SK-N-SH (cell line): ENCODE measurements at regions of chr11 and their contacts with region 1.

Region 1: GRCh38 chr11:1694064-1694845 is 2.7 kb upstream of the KRTAP5-6 start:
- DNase-seq: peak; percentile 95
- H3K4me3 ChIP-seq: peak overlapping the region in 1 of 2 experiments; percentile 51; a peak in 1 of 4 replicates
- H3K27ac ChIP-seq: peak overlapping the region in 1 of 2 experiments; percentile 73; a peak in 1 of 4 replicates
- H3K4me1 ChIP-seq: peaks cover 6 to 13% of the 10 kb centered on the region in 2 experiments; a peak in 2 of 4 replicates
- H3K27me3 ChIP-seq: no peaks in the 10 kb centered on the region
- CTCF ChIP-seq: peak; percentile 85
- EP300 ChIP-seq: no peak
- RAD21 ChIP-seq: peak; percentile 91

Region 2: DNA sequence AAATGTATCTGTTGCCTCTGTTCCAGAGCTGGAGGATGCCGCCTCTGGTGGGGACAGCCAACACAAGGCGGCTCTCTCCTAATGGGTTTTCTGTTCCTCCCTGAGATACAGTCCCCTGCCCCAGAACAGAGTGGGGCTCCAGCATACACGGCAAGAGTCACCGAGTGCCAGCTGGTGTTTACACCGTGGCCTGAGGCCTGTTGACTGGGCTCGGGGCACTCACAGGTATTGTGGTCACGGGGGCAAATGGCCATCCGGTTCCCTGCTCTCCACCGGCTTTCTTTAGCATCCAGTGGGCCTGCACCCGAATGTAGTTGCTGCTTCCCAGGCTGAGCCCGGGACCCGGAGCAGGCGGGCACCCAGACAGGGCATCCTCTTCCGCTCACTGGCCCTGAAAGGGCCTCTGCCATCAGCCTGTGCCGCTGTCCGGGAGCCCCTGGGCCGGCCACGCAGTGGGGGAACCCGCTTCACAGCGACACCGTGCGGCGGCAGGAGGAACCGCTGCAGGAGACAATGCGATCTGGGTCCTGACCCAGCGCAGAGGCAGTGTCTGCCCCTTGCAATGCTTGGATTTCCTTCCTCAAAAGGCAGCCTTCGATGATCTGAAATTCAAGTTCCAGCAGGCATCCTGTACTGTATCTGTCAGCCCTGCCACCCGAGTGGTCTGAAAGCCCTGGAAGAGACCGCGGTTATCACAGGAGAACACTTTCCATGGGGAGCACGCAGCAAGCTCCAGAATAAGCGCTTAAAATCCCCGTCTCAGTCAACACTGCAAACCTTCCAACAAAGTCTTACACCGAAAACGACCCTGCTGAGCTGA is 65.5 kb before region 1 on chr11:
- CTCF ChIA-PET with region 1: interaction called, 12 read pairs
- POLR2A ChIA-PET with region 1: no interaction called
- DNase-seq: peak; percentile 96
- H3K4me3 ChIP-seq: peak overlapping the region in 1 of 2 experiments; percentile 35; a peak in 1 of 4 replicates
- H3K27ac ChIP-seq: no peak overlapping the region
- H3K4me1 ChIP-seq: peaks cover 0 to 11% of the 10 kb centered on the region in 2 experiments; a peak in 1 of 4 replicates
- H3K27me3 ChIP-seq: peaks cover 19% of the 10 kb centered on the region; the same call in 1 of the 2 replicates
- CTCF ChIP-seq: peak; percentile 85
- EP300 ChIP-seq: no peak
- RAD21 ChIP-seq: peak; percentile 69

Region 3: GRCh38 chr11:1706634-1707400 is 12.6 kb after region 1 on chr11:
- CTCF ChIA-PET with region 1: interaction called, 46 read pairs
- POLR2A ChIA-PET with region 1: no interaction called
- DNase-seq: no peak
- H3K4me3 ChIP-seq: no peak overlapping the region
- H3K27ac ChIP-seq: no peak overlapping the region
- H3K4me1 ChIP-seq: no peaks in the 10 kb centered on the region; a peak in 1 of 4 replicates
- H3K27me3 ChIP-seq: no peaks in the 10 kb centered on the region; the same call in 1 of the 2 replicates
- CTCF ChIP-seq: no peak
- EP300 ChIP-seq: no peak
- RAD21 ChIP-seq: peak; percentile 22; the same call in 1 of the 2 replicates

Region 4: DNA sequence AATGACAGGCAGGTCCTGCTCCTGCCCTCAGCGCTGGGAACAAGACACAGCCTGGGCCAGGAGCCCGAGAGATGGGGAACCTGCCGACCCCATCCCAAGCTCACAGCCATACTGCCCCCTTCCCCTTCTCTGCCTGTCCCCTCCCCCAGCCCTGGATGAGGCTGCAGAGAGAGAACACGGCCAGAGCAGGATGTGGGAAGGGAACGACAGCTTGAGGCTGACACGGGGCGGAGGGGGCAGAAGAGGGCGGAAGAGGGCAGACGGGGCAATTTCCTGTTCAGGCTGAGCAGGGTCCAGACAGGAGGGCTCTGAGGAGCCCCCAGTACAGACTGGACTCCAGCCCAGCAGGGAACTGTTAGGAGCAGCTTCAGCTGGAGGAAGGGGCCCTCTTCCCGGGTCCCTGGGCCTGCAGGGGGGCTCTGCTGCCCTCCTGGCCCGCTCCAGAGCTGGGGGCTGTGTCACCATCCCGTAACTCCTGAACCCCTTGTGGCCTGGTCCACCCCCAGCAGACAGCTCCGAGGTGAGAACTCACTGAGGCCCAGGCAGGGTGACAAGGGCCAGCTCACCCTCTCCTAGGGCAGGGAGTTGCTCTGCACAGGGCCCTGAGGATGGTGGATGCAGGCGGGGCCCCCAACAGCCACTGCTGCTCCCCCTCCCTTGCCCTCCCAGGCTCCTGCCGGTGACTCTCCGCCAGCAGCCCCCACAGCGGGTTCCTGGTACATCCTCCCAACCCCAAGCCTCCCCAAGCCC is 63.8 kb after region 1 on chr11:
- CTCF ChIA-PET with region 1: interaction called, 39 read pairs
- POLR2A ChIA-PET with region 1: no interaction called
- DNase-seq: no peak
- H3K4me3 ChIP-seq: no peak overlapping the region
- H3K27ac ChIP-seq: no peak overlapping the region
- H3K4me1 ChIP-seq: peaks cover 0 to 15% of the 10 kb centered on the region in 2 experiments; a peak in 1 of 4 replicates
- H3K27me3 ChIP-seq: no peaks in the 10 kb centered on the region
- CTCF ChIP-seq: no peak
- EP300 ChIP-seq: no peak
- RAD21 ChIP-seq: no peak

Region 5: GRCh38 chr11:1832211-1832919 is 138.1 kb after region 1 on chr11:
- CTCF ChIA-PET with region 1: interaction called, 585 read pairs
- POLR2A ChIA-PET with region 1: interaction called, 11 read pairs
- DNase-seq: peak; percentile 95
- H3K4me3 ChIP-seq: no peak overlapping the region; a peak in 1 of 4 replicates
- H3K27ac ChIP-seq: no peak overlapping the region; a peak in 1 of 4 replicates
- H3K4me1 ChIP-seq: peaks cover 6 to 65% of the 10 kb centered on the region in 2 experiments; a peak in 3 of 4 replicates
- H3K27me3 ChIP-seq: no peaks in the 10 kb centered on the region
- CTCF ChIP-seq: peak; percentile 91
- EP300 ChIP-seq: no peak
- RAD21 ChIP-seq: peak; percentile 75

Region 6: GRCh38 chr11:1882519-1883238 is 188.4 kb after region 1 on chr11:
- CTCF ChIA-PET with region 1: interaction called, 32 read pairs
- POLR2A ChIA-PET with region 1: interaction called, 3 read pairs
- DNase-seq: peak; percentile 97
- H3K4me3 ChIP-seq: no peak overlapping the region; a peak in 1 of 4 replicates
- H3K27ac ChIP-seq: peak overlapping the region in 1 of 2 experiments; percentile 72; a peak in 1 of 4 replicates
- H3K4me1 ChIP-seq: peaks cover 0 to 19% of the 10 kb centered on the region in 2 experiments; a peak in 1 of 4 replicates
- H3K27me3 ChIP-seq: no peaks in the 10 kb centered on the region
- CTCF ChIP-seq: peak; percentile 82
- EP300 ChIP-seq: no peak
- RAD21 ChIP-seq: peak; percentile 89

Region 7: GRCh38 chr11:2027708-2028107 is 333.5 kb after region 1 on chr11:
- CTCF ChIA-PET with region 1: interaction called, 14 read pairs
- POLR2A ChIA-PET with region 1: no interaction called
- DNase-seq: no peak
- H3K4me3 ChIP-seq: no peak overlapping the region
- H3K27ac ChIP-seq: no peak overlapping the region
- H3K4me1 ChIP-seq: no peaks in the 10 kb centered on the region
- H3K27me3 ChIP-seq: no peaks in the 10 kb centered on the region
- CTCF ChIP-seq: no peak
- EP300 ChIP-seq: no peak
- RAD21 ChIP-seq: no peak